ENCODE measurements at regions of chr6 and their contacts with region 1.

Region 1: GRCh38 chr6:163405412-163406309 is 8.9 kb upstream of the QKI start:
- DNase-seq: no peak
- ATAC-seq: peak; percentile 69
- H3K4me3 ChIP-seq: peak overlapping the region; percentile 42; the same call in 1 of the 2 replicates
- H3K27ac ChIP-seq: no peak overlapping the region
- H3K4me1 ChIP-seq: no peaks in the 10 kb centered on the region
- H3K27me3 ChIP-seq: no peaks in the 10 kb centered on the region
- CTCF ChIP-seq: no peak

Region 2: GRCh38 chr6:163355426-163355991 is 50.2 kb before region 1 on chr6:
- CTCF ChIA-PET with region 1: no interaction called
- POLR2A ChIA-PET with region 1: no interaction called
- intact Hi-C with region 1: loop called (anchors 5 kb)
- DNase-seq: peak; percentile 59
- ATAC-seq: peak; percentile 73
- H3K4me3 ChIP-seq: peak overlapping the region; percentile 54
- H3K27ac ChIP-seq: peak overlapping the region; percentile 76
- H3K4me1 ChIP-seq: peaks cover 39% of the 10 kb centered on the region
- H3K27me3 ChIP-seq: no peaks in the 10 kb centered on the region
- CTCF ChIP-seq: no peak